ENCODE measurements at regions of chr22 and their contacts with region 1.

Region 1: DNA sequence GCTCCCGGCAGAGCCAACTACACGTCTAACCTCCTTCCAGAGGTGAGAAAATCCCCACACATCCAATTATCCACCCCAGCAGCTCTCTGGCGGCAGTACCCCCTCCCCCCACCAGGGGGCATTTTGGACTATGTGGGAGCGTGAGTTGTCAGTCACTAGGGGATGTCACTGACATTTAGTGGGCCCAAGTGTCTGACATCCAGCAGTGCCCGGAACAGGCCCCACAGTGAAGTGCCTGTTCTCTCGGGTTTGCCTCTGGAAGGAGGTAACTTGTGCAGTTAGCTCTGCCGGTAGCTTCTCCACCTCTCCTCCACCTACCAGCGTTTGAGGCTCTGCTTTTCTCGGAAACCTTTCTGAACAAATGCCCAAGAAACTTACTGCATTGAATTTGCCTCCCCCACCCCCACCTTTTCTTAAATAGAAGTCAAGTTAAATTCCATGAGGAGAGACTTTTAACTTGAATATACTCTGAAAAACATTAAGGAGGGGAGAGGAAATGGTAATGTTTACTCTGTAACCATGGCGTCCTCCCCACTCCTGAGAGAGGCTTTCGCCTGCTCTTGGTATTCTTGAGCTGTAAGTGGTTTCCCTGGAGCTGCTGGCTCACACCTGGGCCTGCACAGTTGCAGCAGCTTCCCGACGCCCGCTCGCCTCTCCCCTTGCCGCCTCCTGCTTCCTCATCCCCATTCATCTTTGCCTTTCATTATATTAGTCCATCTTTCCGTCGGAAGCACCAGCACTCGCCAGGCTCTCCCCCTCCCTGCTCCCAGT is 112.8 kb downstream of the WNT7B start:
- DNase-seq: peak; percentile 50
- H3K4me3 ChIP-seq: no peak overlapping the region
- H3K27ac ChIP-seq: no peak overlapping the region
- H3K4me1 ChIP-seq: no peaks in the 10 kb centered on the region
- H3K27me3 ChIP-seq: peaks cover 19 to 48% of the 10 kb centered on the region in 2 experiments
- CTCF ChIP-seq: peak; percentile 87 to 88
- POLR2A ChIP-seq: no peak

Region 2: DNA sequence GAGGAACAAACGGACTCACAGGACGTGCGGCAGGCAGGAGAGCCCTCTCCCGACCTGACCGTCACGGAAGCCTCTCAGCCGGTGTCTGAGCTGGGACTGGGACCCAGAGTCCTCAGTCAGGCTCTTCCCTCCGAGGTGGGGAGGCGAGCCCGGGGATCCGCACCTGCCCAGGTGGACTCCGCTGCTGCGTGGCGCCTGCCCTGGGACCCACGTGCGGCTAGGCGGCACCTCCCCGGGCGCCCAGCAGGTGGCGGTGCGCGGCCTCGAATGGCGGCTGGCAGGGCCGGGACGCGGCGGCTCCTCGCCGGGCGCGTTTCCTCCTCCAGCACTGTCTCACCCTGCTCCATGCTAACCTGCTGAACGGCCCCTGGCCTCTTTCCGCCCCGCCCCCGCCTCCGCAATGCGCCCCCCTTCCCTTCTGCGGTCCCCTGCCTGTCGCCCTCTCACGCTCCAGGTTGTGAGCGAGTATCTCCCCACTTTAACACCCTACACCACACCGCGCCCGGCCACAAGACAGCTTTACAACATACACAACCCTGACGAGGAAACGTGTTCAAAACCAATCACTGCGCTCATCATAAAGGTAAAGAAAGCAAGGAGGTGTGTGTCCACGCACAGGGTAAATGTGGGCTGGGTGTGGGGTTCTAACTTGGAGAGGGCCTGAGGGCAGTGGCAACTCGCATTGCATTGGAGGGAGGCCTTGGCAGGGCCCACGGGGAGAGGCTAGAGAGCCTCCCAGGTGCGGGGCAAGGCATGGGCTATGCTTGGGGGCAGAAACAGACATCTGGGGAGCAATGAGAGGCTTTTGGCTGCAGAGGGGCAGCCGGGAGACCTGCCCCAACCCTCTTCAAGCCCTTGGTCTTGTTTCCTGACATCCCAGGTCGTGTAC is 218.4 kb before region 1 on chr22:
- CTCF ChIA-PET with region 1: interaction called, 15 read pairs
- POLR2A ChIA-PET with region 1: no interaction called
- dilution Hi-C with region 1: no loop called
- intact Hi-C with region 1: loop called (anchors 1 kb)
- DNase-seq: peak; percentile 34
- H3K4me3 ChIP-seq: no peak overlapping the region
- H3K27ac ChIP-seq: no peak overlapping the region
- H3K4me1 ChIP-seq: no peaks in the 10 kb centered on the region
- H3K27me3 ChIP-seq: peaks cover 18 to 21% of the 10 kb centered on the region in 2 experiments
- CTCF ChIP-seq: peak; percentile 84 to 91
- POLR2A ChIP-seq: no peak

Region 3: GRCh38 chr22:45831394-45831793 is 32.8 kb before region 1 on chr22:
- CTCF ChIA-PET with region 1: interaction called, 16 read pairs
- POLR2A ChIA-PET with region 1: no interaction called
- dilution Hi-C with region 1: no loop called
- intact Hi-C with region 1: no loop called
- DNase-seq: peak; percentile 26
- H3K4me3 ChIP-seq: no peak overlapping the region
- H3K27ac ChIP-seq: no peak overlapping the region
- H3K4me1 ChIP-seq: peaks cover 11% of the 10 kb centered on the region
- H3K27me3 ChIP-seq: no peaks in the 10 kb centered on the region
- CTCF ChIP-seq: peak; percentile 30 to 31
- POLR2A ChIP-seq: no peak

Region 4: GRCh38 chr22:45878051-45878781 is 14.1 kb after region 1 on chr22:
- CTCF ChIA-PET with region 1: interaction called, 23 read pairs
- POLR2A ChIA-PET with region 1: no interaction called
- dilution Hi-C with region 1: no loop called
- intact Hi-C with region 1: no loop called
- DNase-seq: no peak
- H3K4me3 ChIP-seq: no peak overlapping the region
- H3K27ac ChIP-seq: no peak overlapping the region
- H3K4me1 ChIP-seq: no peaks in the 10 kb centered on the region
- H3K27me3 ChIP-seq: peaks cover 45 to 54% of the 10 kb centered on the region in 2 experiments
- CTCF ChIP-seq: no peak
- POLR2A ChIP-seq: no peak

Region 5: DNA sequence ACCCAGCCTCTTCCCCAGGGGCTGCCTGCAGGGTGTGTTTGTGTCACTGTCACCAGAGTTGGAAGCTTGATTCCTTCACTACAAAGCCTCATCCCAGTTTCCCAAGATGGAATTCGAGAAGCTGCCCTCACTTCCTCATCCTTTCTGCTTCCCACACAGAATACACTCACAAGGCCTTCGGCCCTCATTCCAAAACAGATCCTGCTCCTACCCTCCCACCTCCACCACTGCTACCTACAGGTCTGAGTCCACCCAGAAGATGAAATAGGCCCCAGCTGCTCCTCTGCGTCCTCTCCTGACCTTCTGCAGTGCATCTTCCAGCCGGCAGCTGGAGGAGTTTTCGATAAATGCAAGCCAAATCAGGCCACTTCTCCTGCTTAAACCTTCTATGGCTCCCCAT is 119.6 kb after region 1 on chr22:
- CTCF ChIA-PET with region 1: no interaction called
- POLR2A ChIA-PET with region 1: no interaction called
- dilution Hi-C with region 1: no loop called
- intact Hi-C with region 1: no loop called
- DNase-seq: no peak
- H3K4me3 ChIP-seq: no peak overlapping the region
- H3K27ac ChIP-seq: no peak overlapping the region
- H3K4me1 ChIP-seq: no peaks in the 10 kb centered on the region
- H3K27me3 ChIP-seq: peaks cover 0 to 1% of the 10 kb centered on the region in 2 experiments
- CTCF ChIP-seq: no peak
- POLR2A ChIP-seq: no peak

Measured in endothelial cell of umbilical vein (primary cell).